ENCODE measurements at regions of chr13 and their contacts with region 1.

Region 1: GRCh38 chr13:77506874-77507273 is 28.6 kb upstream of the SCEL start:
- DNase-seq: no peak
- ATAC-seq: no peak
- H3K4me3 ChIP-seq: no peak overlapping the region
- H3K27ac ChIP-seq: no peak overlapping the region
- H3K4me1 ChIP-seq: peaks cover 17% of the 10 kb centered on the region
- H3K27me3 ChIP-seq: no peaks in the 10 kb centered on the region
- CTCF ChIP-seq: peak; percentile 16 to 32 (median 22); a peak in 3 of 6 replicates
- EP300 ChIP-seq: no peak
- POLR2A ChIP-seq: no peak
- RAD21 ChIP-seq: peak; percentile 18; the same call in 1 of the 2 replicates

Region 2: GRCh38 chr13:77470986-77471385 is 35.9 kb before region 1 on chr13:
- CTCF ChIA-PET with region 1: no interaction called
- POLR2A ChIA-PET with region 1: no interaction called
- RAD21 ChIA-PET with region 1: no interaction called
- SMC1A ChIA-PET with region 1: no interaction called
- in situ Hi-C with region 1: no loop called
- intact Hi-C with region 1: no loop called
- DNase-seq: no peak
- ATAC-seq: no peak
- H3K4me3 ChIP-seq: no peak overlapping the region
- H3K27ac ChIP-seq: no peak overlapping the region
- H3K4me1 ChIP-seq: no peaks in the 10 kb centered on the region
- H3K27me3 ChIP-seq: no peaks in the 10 kb centered on the region
- CTCF ChIP-seq: no peak
- EP300 ChIP-seq: no peak
- POLR2A ChIP-seq: no peak
- RAD21 ChIP-seq: no peak

Region 3: DNA sequence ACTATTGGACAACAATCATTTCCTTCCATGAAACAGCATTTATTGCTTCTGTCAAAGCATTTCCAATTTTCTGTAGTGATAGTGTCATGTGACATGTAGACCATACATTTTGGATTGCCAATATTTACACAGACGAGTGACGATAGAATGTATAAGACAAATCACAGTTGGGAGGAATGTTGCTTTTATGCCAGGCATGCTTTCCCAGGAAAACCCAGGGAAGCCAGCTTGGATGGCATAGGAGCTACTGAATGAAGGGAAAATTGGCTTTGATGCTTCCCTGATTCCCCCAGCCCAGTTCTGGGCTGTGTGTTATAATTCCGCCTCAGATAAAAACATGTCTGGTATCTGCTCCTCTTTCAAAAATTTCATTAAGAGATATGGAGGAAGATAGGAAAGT is 51.1 kb after region 1 on chr13:
- CTCF ChIA-PET with region 1: interaction called, 61 read pairs
- POLR2A ChIA-PET with region 1: no interaction called
- RAD21 ChIA-PET with region 1: no interaction called
- SMC1A ChIA-PET with region 1: interaction called, 85 read pairs
- in situ Hi-C with region 1: no loop called
- intact Hi-C with region 1: loop called (anchors 2 kb)
- DNase-seq: no peak
- ATAC-seq: no peak
- H3K4me3 ChIP-seq: no peak overlapping the region
- H3K27ac ChIP-seq: no peak overlapping the region
- H3K4me1 ChIP-seq: peaks cover 15% of the 10 kb centered on the region
- H3K27me3 ChIP-seq: no peaks in the 10 kb centered on the region
- CTCF ChIP-seq: no peak
- EP300 ChIP-seq: no peak
- POLR2A ChIP-seq: no peak
- RAD21 ChIP-seq: no peak

Region 4: GRCh38 chr13:77653301-77653700 is 146.4 kb after region 1 on chr13:
- CTCF ChIA-PET with region 1: no interaction called
- POLR2A ChIA-PET with region 1: no interaction called
- RAD21 ChIA-PET with region 1: no interaction called
- SMC1A ChIA-PET with region 1: no interaction called
- in situ Hi-C with region 1: no loop called
- intact Hi-C with region 1: no loop called
- DNase-seq: no peak
- ATAC-seq: no peak
- H3K4me3 ChIP-seq: no peak overlapping the region
- H3K27ac ChIP-seq: no peak overlapping the region
- H3K4me1 ChIP-seq: no peaks in the 10 kb centered on the region
- H3K27me3 ChIP-seq: no peaks in the 10 kb centered on the region
- CTCF ChIP-seq: no peak
- EP300 ChIP-seq: no peak
- POLR2A ChIP-seq: no peak
- RAD21 ChIP-seq: no peak

Region 5: DNA sequence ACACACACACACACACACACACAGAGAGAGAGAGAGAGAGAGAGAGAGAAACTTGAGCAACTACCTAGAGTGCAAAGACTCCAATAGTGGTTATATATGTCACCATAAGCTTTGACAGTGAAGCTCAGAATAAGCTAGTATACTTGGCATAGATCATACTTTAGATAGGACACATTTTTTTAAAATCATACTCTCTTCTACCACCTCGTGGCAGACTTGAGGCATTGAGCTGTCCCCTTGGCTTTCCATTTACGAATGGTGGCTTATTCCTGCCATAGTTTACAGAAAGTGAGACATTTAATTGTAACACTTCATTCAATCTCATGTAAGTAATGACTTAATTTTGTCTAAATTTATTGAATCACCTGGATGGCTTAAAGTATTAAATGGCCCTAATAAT is 303.6 kb after region 1 on chr13:
- CTCF ChIA-PET with region 1: no interaction called
- POLR2A ChIA-PET with region 1: no interaction called
- RAD21 ChIA-PET with region 1: no interaction called
- SMC1A ChIA-PET with region 1: no interaction called
- in situ Hi-C with region 1: no loop called
- intact Hi-C with region 1: no loop called
- DNase-seq: no peak
- ATAC-seq: peak; percentile 73
- H3K4me3 ChIP-seq: no peak overlapping the region
- H3K27ac ChIP-seq: no peak overlapping the region
- H3K4me1 ChIP-seq: no peaks in the 10 kb centered on the region
- H3K27me3 ChIP-seq: no peaks in the 10 kb centered on the region
- CTCF ChIP-seq: peak; percentile 27 to 45 (median 28); a peak in 4 of 6 replicates
- EP300 ChIP-seq: no peak
- POLR2A ChIP-seq: no peak
- RAD21 ChIP-seq: peak; percentile 47